OCI-LY7 (cell line): ENCODE measurements at regions of chr21 and their contacts with region 1.

Region 1: GRCh38 chr21:25421327-25422028 is 185.8 kb downstream of the MRPL39 start:
- DNase-seq: peak; percentile 50
- H3K4me3 ChIP-seq: no peak overlapping the region
- H3K27ac ChIP-seq: no peak overlapping the region
- H3K4me1 ChIP-seq: peaks cover 17% of the 10 kb centered on the region
- CTCF ChIP-seq: peak; percentile 73

Region 2: DNA sequence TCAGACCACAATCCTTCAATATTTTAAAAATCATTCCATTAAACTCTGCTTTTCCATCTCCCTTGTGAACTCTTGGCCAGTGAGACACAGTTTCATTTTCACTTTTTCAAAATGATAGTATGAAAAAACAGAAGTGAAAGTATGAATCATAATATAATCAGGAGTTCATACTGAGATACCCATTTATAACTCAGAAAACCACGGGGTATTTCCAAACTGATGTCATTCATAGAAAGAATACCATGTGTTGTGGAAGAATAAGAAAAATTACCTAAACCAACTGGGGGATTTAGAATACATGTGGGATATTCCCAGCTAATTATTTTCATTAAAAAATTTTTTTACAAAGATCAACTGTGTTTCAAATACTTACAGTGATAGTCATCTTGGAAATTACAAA is 35.9 kb after region 1 on chr21:
- CTCF ChIA-PET with region 1: no interaction called
- POLR2A ChIA-PET with region 1: interaction called, 10 read pairs
- intact Hi-C with region 1: no loop called
- DNase-seq: peak; percentile 61
- H3K4me3 ChIP-seq: no peak overlapping the region
- H3K27ac ChIP-seq: no peak overlapping the region
- H3K4me1 ChIP-seq: peaks cover 31% of the 10 kb centered on the region
- CTCF ChIP-seq: no peak

Region 3: DNA sequence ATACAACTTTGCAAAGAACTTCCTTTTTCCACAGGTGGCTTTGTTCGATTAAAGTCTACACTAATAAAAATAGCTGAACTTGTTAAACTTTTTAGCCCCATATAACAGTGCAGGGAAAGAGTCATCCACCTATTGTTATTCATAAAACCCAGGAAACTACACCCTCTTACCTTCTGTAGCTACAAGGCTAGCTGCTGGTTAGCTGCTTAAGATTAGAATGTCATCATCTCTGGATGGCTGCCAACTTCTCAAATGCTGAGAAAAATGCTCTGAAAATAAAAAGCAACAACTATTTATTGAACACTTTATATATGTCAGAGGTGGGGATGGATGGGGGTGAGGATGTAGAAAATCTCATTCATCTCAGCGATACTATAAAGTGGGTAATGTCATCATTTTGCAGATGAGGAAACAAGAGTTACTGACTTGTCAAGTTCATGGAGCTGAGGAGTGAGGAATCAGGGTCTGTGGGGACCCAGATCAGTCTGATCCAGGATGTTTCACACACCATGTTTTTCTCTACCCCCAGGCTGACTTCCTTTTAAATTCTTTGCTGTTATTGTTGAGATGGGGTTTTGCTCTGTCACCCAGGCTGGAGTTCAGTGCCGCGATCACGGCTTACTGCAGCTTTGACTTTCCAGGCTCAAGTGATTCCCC is 296.1 kb after region 1 on chr21:
- CTCF ChIA-PET with region 1: no interaction called
- POLR2A ChIA-PET with region 1: no interaction called
- intact Hi-C with region 1: loop called (anchors 10 kb)
- DNase-seq: no peak
- H3K4me3 ChIP-seq: no peak overlapping the region
- H3K27ac ChIP-seq: no peak overlapping the region
- H3K4me1 ChIP-seq: no peaks in the 10 kb centered on the region
- CTCF ChIP-seq: no peak

Region 4: DNA sequence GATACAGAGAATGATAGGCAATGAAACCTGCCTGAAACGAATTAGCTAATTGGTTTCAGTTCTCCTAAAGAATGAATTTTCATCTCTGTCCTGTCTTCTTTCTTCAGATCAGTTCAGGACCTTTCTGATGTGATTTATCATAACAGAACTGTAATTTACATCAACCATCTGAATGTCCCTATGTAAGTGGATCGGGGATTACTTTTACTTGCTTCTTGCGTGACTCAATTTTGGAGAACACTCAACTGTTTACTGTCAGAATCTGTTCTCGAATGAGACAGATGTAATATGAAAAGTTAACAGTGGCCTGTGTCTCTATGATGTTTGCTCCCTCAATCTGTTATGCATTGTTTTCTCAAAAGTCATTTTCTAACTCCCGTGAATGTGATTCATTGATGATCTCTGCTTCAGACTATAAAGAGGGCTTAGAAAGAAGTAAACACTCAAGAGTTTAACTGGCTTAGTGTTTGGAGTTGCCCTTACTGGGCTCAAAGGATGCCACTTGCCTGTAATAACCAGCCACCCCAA is 424.3 kb after region 1 on chr21:
- CTCF ChIA-PET with region 1: no interaction called
- POLR2A ChIA-PET with region 1: no interaction called
- intact Hi-C with region 1: no loop called
- DNase-seq: no peak
- H3K4me3 ChIP-seq: no peak overlapping the region
- H3K27ac ChIP-seq: no peak overlapping the region
- H3K4me1 ChIP-seq: no peaks in the 10 kb centered on the region
- CTCF ChIP-seq: no peak